ENCODE measurements at regions of chr5 and their contacts with region 1.

Region 1: GRCh38 chr5:125176009-125176477 is 429.6 kb upstream of the ZNF608 start:
- DNase-seq: no peak
- H3K4me3 ChIP-seq: no peak overlapping the region
- H3K27ac ChIP-seq: no peak overlapping the region
- H3K4me1 ChIP-seq: no peaks in the 10 kb centered on the region
- H3K27me3 ChIP-seq: no peaks in the 10 kb centered on the region
- CTCF ChIP-seq: no peak
- POLR2A ChIP-seq: no peak

Region 2: GRCh38 chr5:126182971-126183695 is 1007.1 kb after region 1 on chr5:
- intact Hi-C with region 1: loop called (anchors 5 kb)
- DNase-seq: peak; percentile 62 to 88
- H3K4me3 ChIP-seq: no peak overlapping the region
- H3K27ac ChIP-seq: peak overlapping the region in 1 of 2 donors; percentile 30
- H3K4me1 ChIP-seq: no peaks in the 10 kb centered on the region
- H3K27me3 ChIP-seq: no peaks in the 10 kb centered on the region
- CTCF ChIP-seq: no peak
- POLR2A ChIP-seq: no peak